Activated CD8-positive, alpha-beta memory T cell treated with anti-CD3 and anti-CD28 coated beads, Interleukin-2, amount 10 ng/mL, durations not matched to agents 7 days and 5 days (primary cell): ENCODE measurements at regions of chr14 and their contacts with region 1.

Region 1: GRCh38 chr14:20682435-20683124 is 1.8 kb upstream of the RNASE4 start:
- DNase-seq: peak; percentile 86
- ATAC-seq: peak; percentile 63
- H3K4me3 Mint-ChIP-seq: no peak overlapping the region
- H3K27ac Mint-ChIP-seq: no peak overlapping the region
- H3K4me1 Mint-ChIP-seq: peaks cover 12% of the 10 kb centered on the region
- H3K27me3 Mint-ChIP-seq: no peaks in the 10 kb centered on the region

Region 2: DNA sequence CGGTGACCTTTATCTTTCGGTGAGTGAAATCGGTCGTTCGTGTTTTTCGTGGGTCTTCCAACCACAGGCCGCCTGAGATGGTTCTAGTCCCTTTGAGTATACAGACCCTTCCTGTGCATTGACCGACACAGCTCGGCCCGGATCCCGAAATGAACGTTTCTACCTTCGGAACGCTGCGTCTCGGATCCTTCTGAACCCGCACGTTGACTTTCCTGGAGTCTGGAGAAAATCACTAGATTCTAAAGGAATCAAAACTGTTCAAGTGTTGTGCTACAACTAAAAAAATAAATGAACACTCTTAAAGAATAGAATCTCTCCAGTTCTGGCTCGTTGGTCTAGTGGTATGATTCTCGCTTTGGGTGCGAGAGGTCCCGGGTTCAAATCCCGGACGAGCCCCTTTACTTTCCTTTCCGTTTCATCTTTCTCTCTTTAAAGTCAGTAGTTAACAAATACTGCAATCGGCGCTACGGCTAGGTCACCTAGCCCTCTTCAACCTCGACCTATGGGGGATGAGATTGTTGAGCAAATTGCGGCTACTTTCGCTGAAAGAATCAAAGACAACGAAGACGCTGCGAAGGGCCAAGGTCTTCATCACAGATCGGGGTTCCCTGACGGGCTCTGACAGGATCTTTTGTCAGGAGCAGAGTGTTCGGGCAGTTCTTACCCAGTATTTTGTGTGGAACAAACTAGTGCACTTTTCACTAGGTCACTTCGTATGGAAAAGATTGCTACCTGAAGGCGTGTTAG is 49.7 kb before region 1 on chr14:
- CTCF ChIA-PET with region 1: interaction called, 17 read pairs
- DNase-seq: peak; percentile 84
- ATAC-seq: peak; percentile 84
- H3K4me3 Mint-ChIP-seq: peak overlapping the region; percentile 73
- H3K27ac Mint-ChIP-seq: peak overlapping the region; percentile 81
- H3K4me1 Mint-ChIP-seq: peaks cover 39% of the 10 kb centered on the region
- H3K27me3 Mint-ChIP-seq: peaks cover 79% of the 10 kb centered on the region

Region 3: GRCh38 chr14:20662968-20663732 is 19.4 kb before region 1 on chr14:
- CTCF ChIA-PET with region 1: interaction called, 163 read pairs
- DNase-seq: peak; percentile 90
- ATAC-seq: peak; percentile 82
- H3K4me3 Mint-ChIP-seq: peak overlapping the region; percentile 78
- H3K27ac Mint-ChIP-seq: peak overlapping the region; percentile 28
- H3K4me1 Mint-ChIP-seq: peaks cover 49% of the 10 kb centered on the region
- H3K27me3 Mint-ChIP-seq: peaks cover 32% of the 10 kb centered on the region